Activated CD4-positive, alpha-beta T cell treated with anti-CD3 and anti-CD28 coated beads for 36 hours (primary cell): ENCODE measurements at regions of chrX and their contacts with region 1.

Region 1: DNA sequence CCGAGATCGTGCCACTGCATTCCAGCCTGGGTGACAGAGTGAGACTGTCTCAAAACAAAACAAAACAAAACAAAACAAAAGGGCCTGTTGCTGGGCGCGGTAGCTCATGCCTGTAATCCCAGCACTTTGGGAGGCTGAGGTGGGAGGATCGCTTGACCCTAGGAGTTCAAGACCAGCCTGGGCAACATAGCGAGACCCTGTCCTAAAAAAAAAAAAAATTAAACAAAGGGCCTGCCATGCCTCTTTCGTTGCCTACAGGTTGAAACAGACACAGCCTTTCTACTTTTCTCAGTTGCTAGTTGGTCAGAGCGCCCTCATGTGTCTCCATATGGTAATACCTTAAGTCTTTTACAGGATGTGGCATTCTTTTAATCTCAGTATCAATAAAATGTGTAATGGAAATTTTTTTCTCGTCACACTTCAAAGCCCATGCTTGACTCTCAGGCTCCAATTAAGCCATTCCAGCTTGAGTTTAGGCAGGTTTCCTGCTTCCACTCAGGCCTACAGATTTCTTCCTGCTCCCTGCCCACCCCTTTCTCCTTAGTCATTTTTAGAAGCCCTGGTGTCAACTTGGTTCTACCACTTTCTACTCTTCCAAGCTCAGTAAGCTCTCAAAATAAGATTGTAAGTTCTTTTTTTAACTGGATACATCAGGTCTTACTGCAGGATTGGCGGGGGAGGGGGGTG is 4.7 kb upstream of the SOWAHD start:
- DNase-seq: peak; percentile 67
- ATAC-seq: peak; percentile 51
- H3K4me3 Mint-ChIP-seq: peak overlapping the region; percentile 39
- H3K27ac Mint-ChIP-seq: peak overlapping the region; percentile 97
- H3K4me1 Mint-ChIP-seq: peaks cover 42% of the 10 kb centered on the region
- H3K27me3 Mint-ChIP-seq: no peaks in the 10 kb centered on the region

Region 2: DNA sequence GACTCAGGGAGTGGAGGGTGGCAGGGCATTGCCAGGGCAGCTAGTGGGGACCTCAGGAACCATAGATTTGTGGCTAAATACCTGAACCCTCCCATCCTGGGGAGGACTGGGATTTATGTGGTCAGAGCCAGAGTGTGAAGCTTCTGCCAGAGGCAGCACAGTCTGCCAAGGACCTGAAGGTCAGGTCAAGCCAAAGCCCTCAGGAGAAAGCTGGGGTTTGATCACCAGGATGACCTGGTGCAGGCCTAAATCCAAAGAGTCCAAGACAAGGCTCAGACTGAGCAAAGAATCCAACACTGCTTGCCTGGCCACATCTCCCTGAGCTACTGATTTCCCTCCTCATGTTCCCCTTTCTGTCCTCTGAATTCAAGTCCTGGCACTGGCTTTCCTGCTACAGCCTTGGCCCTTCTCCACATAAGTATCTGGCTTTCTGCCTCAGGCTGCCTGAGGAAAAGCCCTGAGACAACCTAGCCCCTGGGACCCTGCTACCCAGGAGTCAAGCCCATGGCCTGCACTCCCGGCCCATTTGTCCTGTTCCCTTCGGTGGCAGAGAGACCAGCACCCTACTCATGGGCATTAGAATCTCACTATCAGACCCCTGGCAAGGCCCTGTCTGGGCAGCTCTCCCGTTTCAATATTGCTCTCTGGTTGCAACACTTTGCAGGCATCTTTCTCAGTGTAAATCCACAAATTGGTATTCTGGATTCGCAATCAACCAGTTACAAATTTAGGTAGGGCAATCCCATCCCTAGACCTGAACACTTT is 393.9 kb before region 1 on chrX:
- CTCF ChIA-PET with region 1: no interaction called
- POLR2A ChIA-PET with region 1: no interaction called
- intact Hi-C with region 1: no loop called
- DNase-seq: no peak
- ATAC-seq: no peak
- H3K4me3 Mint-ChIP-seq: no peak overlapping the region
- H3K27ac Mint-ChIP-seq: no peak overlapping the region
- H3K4me1 Mint-ChIP-seq: no peaks in the 10 kb centered on the region
- H3K27me3 Mint-ChIP-seq: no peaks in the 10 kb centered on the region

Region 3: DNA sequence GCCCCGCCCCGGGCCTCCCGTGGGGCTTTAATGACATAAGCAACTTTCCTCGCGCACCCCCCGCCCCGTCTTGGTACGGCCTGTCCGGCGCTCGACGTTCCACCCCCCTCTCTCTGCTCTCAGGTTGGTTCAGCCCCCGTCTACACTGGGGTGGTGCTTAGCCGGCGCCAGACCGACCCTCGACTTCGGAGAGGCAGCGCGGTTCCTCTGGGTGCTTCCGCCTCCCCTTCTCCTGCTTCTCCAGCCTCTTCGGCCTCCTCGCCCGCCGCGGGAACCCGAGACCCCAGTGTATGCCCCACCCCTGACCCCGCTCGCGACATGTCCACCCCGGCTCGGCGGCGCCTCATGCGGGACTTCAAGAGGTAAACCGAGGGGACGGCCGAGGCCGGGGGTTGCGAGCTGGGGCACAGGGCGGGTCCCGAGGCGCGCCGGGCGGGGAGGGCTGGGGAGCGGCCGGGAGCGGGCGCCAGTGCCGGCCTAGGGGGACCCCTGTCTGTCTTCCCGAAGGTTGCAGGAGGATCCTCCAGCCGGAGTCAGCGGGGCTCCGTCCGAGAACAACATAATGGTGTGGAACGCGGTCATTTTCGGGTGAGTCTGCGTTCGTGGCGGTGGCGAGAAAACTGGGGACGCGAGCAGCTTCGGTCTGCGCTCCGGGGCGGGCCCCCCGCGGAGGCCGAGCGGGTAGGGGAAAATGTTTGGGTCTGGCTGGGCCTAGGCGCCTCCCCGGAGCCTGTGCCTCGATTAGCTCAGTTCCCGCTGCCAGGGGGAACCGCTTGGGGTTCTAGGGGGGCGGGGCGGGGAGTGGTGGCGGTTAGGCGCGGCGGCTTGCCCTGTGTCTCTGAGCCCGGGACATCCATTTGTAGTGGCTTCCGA is 179.1 kb before region 1 on chrX and contains the start of gene UBE2A:
- CTCF ChIA-PET with region 1: no interaction called
- POLR2A ChIA-PET with region 1: interaction called, 4 read pairs
- intact Hi-C with region 1: loop called in 1 of 2 experiments (anchors 1 kb)
- DNase-seq: peak; percentile 92
- ATAC-seq: peak; percentile 92
- H3K4me3 Mint-ChIP-seq: peak within 1 kb of the TSS; percentile 94
- H3K27ac Mint-ChIP-seq: peak within 1 kb of the TSS; percentile 87
- H3K4me1 Mint-ChIP-seq: peaks cover 24% of the 10 kb centered on the region
- H3K27me3 Mint-ChIP-seq: no peaks in the 10 kb centered on the region
- total RNA-seq, gene UBE2A: 49.2 to 67.9 TPM

Region 4: DNA sequence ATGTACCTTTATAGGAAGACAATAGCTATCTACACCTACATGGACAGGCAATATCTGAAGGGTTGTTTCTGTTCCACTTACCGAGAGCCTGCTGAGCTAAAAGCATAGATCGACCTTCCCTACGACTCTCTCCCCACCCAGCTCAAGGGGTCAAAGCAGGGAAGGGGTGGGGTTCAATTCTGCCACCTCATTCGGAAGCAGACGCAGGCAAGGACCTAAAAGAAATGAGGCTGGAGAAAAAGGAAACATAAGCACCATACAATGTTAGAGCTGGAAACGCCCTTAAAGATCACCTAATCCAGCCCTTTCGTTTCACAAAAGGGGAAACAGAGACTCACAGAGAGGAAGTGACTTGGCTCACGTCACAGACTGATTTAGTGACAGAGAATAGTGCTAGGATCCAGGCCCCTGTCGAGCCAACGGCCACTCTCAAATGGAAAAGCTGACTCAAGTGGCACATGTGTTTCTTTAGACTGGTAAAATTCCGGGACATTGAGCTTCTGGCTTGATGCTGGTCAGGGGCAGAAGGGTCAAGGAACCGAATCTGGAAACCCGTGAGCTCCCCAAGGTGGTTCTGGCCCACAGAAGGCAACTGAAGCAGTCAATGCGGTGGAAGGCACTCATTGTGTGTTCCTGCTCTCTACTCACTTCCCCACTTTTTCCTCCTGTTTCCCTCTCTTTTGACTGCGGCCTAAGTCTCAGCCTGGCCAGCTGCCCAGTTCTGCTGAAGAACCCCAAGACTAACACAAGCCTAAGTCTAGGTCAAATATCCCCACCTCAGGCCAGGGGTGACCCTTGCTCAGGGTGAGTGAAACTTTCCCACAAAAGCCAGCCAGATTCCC is 68.3 kb before region 1 on chrX:
- CTCF ChIA-PET with region 1: interaction called, 5 read pairs
- POLR2A ChIA-PET with region 1: interaction called, 4 read pairs
- intact Hi-C with region 1: loop called in 1 of 2 experiments (anchors 2 kb)
- DNase-seq: peak; percentile 73
- ATAC-seq: peak; percentile 51
- H3K4me3 Mint-ChIP-seq: peak overlapping the region; percentile 98
- H3K27ac Mint-ChIP-seq: peak overlapping the region; percentile 98
- H3K4me1 Mint-ChIP-seq: peaks cover 54% of the 10 kb centered on the region
- H3K27me3 Mint-ChIP-seq: no peaks in the 10 kb centered on the region

Region 5: DNA sequence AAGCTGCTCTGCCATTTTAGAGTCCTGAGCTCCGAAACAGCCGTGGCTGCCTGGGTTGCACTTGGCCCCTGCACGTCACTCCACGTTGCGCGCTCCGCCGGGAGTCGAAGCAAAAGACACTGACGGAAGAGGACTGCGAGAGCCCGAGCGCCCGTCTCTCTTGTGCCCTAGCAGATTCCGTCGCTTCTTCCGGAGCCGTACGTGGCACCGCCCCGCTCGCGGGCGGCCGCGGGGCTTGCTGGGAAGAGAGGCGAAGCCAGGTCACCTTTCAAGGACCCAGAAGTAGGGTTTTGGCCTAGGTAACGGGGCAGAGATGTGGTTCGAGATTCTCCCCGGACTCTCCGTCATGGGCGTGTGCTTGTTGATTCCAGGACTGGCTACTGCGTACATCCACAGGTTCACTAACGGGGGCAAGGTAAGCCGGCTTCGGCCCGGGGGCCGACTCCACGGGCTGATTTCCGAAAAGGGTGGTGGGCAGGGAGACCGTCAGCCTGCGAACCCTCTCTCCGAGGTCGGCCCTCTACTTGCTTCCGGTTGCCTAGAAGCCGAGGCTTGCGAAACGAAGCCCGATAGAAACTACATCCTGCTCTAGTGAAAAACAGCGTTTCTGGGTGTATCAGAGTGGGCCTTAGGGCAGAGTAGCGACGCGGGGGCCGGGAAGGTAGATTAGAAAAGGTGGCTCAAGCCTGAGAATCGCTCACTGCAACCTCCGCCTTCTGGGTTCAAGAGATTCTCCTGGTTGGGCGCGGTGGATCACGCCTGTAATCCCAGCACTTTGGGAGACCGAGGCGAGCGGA is 118.1 kb after region 1 on chrX and contains the starts of genes NDUFA1 and RNF113A:
- CTCF ChIA-PET with region 1: no interaction called
- POLR2A ChIA-PET with region 1: interaction called, 4 read pairs
- intact Hi-C with region 1: loop called (anchors 10 kb)
- DNase-seq: peak; percentile 91
- ATAC-seq: peak; percentile 93
- H3K4me3 Mint-ChIP-seq: peak within 1 kb of the TSS; percentile 100
- H3K27ac Mint-ChIP-seq: peak within 1 kb of the TSS; percentile 99
- H3K4me1 Mint-ChIP-seq: peaks cover 14% of the 10 kb centered on the region
- H3K27me3 Mint-ChIP-seq: no peaks in the 10 kb centered on the region
- total RNA-seq, gene NDUFA1: 37.6 to 101 TPM
- total RNA-seq, gene RNF113A: 26.9 to 29.9 TPM

Region 6: GRCh38 chrX:120021927-120022326 is 268.2 kb after region 1 on chrX:
- CTCF ChIA-PET with region 1: no interaction called
- POLR2A ChIA-PET with region 1: no interaction called
- intact Hi-C with region 1: no loop called
- DNase-seq: no peak
- ATAC-seq: no peak
- H3K4me3 Mint-ChIP-seq: no peak overlapping the region
- H3K27ac Mint-ChIP-seq: no peak overlapping the region
- H3K4me1 Mint-ChIP-seq: no peaks in the 10 kb centered on the region
- H3K27me3 Mint-ChIP-seq: peaks cover 9% of the 10 kb centered on the region

Region 7: DNA sequence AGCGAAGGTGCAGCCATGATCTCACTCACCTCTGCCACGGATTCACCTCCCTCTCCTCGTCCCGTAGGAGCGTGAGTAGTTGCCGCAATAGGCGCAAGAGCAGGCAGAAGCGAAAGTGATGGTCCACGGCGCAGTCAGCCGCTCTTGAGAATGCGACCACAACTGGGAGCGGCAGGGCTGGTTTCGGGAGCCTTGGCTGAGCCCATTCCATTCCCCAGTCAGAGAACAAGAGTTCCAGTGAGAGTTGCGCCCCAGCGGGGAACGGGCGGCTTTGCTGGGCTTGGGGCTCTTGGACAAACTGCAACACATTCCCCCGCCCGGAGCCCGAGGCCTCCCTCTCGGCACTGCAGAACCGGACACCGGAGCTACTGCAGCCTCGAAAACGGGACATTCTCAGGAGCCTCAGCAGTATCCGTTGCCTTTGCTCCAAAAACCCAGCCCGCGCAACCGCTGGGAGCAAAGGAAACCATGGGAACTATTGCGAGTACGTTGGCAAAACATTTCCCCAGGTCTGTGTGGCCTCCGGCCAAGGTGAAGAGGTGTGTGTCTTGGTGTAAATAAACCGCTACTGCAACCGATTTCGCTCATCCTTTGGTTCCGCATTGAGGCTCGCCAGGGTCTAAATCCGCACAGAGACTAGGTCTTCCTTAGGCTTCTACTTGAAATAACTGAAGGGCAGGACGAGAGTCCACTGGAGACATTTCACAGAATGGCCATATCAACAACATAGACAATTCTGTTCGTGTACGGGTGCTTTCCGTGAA is 491.2 kb after region 1 on chrX:
- CTCF ChIA-PET with region 1: no interaction called
- POLR2A ChIA-PET with region 1: no interaction called
- intact Hi-C with region 1: loop called in 1 of 2 experiments (anchors 10 kb)
- DNase-seq: peak; percentile 74
- ATAC-seq: peak; percentile 84
- H3K4me3 Mint-ChIP-seq: peak overlapping the region; percentile 82
- H3K27ac Mint-ChIP-seq: peak overlapping the region; percentile 92
- H3K4me1 Mint-ChIP-seq: peaks cover 24% of the 10 kb centered on the region
- H3K27me3 Mint-ChIP-seq: no peaks in the 10 kb centered on the region

Region 8: DNA sequence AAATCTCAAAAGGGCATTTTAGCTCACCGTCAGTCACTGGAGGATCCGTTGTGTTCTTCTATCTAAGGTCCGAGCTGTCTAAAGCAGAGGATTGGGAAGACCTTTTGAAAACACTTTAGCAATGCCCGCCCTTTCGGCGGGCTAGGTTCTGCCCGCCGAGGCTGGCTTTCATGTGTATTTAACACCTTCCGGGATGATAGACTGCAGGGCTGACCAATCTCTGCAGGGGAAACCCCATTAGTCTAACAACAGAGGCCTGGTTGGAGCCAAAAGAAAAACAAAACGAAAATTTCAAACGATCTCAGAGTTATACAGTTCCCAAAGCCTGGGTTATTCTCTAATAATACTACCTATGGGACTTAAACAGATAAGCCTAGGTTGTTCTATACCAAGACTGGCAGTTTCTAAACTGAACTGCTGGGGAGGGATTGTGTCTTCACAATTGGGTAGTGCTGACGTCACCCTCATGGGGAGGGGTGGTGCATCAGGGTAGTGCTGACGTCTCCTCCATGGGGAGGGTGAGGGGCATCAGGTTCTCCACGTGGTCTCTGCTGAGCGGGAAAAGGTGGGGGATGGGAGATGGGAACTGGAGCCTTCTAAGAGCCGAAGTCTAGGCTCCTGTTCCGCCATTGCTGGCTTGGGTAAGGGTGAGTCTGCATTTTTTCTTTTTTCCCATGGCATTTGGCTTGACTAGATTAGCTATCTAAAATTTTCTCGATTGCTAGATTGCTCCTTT is 821.8 kb after region 1 on chrX:
- CTCF ChIA-PET with region 1: no interaction called
- POLR2A ChIA-PET with region 1: no interaction called
- intact Hi-C with region 1: no loop called
- DNase-seq: no peak
- ATAC-seq: no peak
- H3K4me3 Mint-ChIP-seq: no peak overlapping the region
- H3K27ac Mint-ChIP-seq: no peak overlapping the region
- H3K4me1 Mint-ChIP-seq: peaks cover 2% of the 10 kb centered on the region
- H3K27me3 Mint-ChIP-seq: peaks cover 2% of the 10 kb centered on the region